Right cardiac atrium (tissue), 5 donors: ENCODE measurements at regions of chr18 and their contacts with region 1.

Region 1: GRCh38 chr18:48022531-48023329 is 92.3 kb upstream of the SMAD2 start:
- DNase-seq: peak in 1 of 3 donors; percentile 48
- ATAC-seq: peak; percentile 59 to 68
- H3K4me3 ChIP-seq: no peak overlapping the region
- H3K27ac ChIP-seq: no peak overlapping the region
- H3K4me1 ChIP-seq: peaks cover 7% of the 10 kb centered on the region
- H3K27me3 ChIP-seq: no peaks in the 10 kb centered on the region

Region 2: DNA sequence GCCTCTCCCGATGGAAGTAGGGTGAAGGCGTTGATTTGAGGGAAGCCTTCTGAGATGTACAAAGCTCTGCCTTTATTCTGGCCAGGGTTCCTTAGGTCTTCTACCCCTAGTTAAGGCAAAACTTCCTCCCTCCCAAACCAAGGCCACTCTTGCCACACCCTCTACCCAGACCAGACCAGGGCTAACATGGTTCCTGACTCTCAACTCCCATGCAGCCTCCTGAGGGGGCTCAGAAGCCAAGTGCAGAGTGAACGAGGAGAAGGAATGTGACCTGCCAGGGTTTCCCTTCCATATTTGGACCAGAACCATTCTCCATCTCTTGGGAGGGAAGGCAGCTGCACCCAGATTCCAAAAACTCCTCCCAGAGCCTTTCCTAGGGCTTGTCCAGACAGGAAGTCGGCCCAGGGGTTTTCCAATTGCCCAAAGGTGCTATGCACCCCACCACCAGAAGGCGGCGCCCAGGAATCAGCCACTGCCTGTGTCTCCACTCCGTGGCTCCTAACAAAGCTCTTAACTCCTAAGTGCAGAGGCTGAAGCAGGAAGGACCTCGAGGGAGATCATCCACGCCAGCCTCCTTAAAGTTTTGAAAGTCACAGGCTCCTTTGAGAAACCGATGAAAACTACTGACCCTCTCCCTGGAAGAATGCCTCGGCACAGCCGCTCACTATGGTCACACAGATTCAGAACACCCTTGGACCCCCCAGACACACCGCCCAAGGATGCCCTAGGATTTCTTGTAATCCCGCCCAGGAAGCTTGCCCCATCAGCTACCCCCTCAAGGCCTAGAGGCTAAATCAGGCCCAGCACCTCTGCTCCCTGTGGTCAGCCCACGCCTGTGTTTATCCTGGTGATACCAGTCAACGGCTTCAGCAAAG is 250.1 kb before region 1 on chr18:
- intact Hi-C with region 1: loop called (anchors 2 to 10 kb)
- DNase-seq: peak in 2 of 3 donors; percentile 72 to 74
- ATAC-seq: peak; percentile 40 to 70
- H3K4me3 ChIP-seq: no peak overlapping the region
- H3K27ac ChIP-seq: no peak overlapping the region
- H3K4me1 ChIP-seq: no peaks in the 10 kb centered on the region
- H3K27me3 ChIP-seq: no peaks in the 10 kb centered on the region